Activated CD4-positive, alpha-beta T cell treated with anti-CD3 and anti-CD28 coated beads for 36 hours (primary cell): ENCODE measurements at regions of chr12 and their contacts with region 1.

Region 1: GRCh38 chr12:96489103-96490056 is at the start of gene CFAP54:
- DNase-seq: peak; percentile 97
- ATAC-seq: peak; percentile 86
- H3K4me3 Mint-ChIP-seq: peak within 1 kb of the TSS; percentile 80
- H3K27ac Mint-ChIP-seq: peak within 1 kb of the TSS; percentile 66
- H3K4me1 Mint-ChIP-seq: peaks cover 33% of the 10 kb centered on the region
- H3K27me3 Mint-ChIP-seq: no peaks in the 10 kb centered on the region
- total RNA-seq, gene CFAP54: 0.37 to 0.44 TPM

Region 2: GRCh38 chr12:96177013-96177412 is 312.4 kb before region 1 on chr12:
- CTCF ChIA-PET with region 1: no interaction called
- POLR2A ChIA-PET with region 1: no interaction called
- intact Hi-C with region 1: loop called (anchors 1 kb)
- DNase-seq: peak; percentile 88
- ATAC-seq: peak; percentile 98
- H3K4me3 Mint-ChIP-seq: peak overlapping the region; percentile 18
- H3K27ac Mint-ChIP-seq: peak overlapping the region; percentile 83
- H3K4me1 Mint-ChIP-seq: peaks cover 25% of the 10 kb centered on the region
- H3K27me3 Mint-ChIP-seq: no peaks in the 10 kb centered on the region

Region 3: DNA sequence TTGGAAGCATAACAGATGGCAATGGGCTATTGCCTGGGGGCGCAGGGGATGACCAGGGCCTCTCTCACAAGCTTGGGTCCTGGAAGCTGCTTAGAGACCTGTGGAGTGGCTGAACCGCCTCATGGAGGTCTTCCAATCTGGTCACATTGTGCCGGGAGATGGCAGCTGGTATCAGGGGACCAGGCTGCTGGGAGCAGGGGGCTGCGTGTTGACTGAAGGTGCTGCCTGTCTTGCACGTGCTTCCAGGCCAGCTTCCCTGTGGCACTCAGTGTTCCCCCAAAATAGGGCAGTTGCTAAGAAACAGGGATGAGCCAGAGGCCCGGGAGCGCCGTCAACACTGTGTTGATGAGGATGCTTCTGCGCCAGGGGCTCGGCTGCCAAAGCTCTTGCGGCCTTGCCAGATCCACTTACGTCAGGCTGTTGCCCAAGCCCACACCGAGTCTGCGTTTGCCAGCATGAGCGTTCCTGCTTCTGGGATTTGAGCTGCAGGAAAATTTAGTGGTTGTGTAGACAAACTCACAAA is 255.4 kb before region 1 on chr12:
- CTCF ChIA-PET with region 1: no interaction called
- POLR2A ChIA-PET with region 1: no interaction called
- intact Hi-C with region 1: no loop called
- DNase-seq: no peak
- ATAC-seq: no peak
- H3K4me3 Mint-ChIP-seq: no peak overlapping the region
- H3K27ac Mint-ChIP-seq: no peak overlapping the region
- H3K4me1 Mint-ChIP-seq: peaks cover 46% of the 10 kb centered on the region
- H3K27me3 Mint-ChIP-seq: no peaks in the 10 kb centered on the region

Region 4: GRCh38 chr12:96434107-96434506 is 55.3 kb before region 1 on chr12:
- CTCF ChIA-PET with region 1: interaction called, 3 read pairs
- POLR2A ChIA-PET with region 1: no interaction called
- intact Hi-C with region 1: loop called (anchors 1 to 2 kb)
- DNase-seq: peak; percentile 85
- ATAC-seq: peak; percentile 99
- H3K4me3 Mint-ChIP-seq: peak overlapping the region; percentile 17
- H3K27ac Mint-ChIP-seq: peak overlapping the region; percentile 83
- H3K4me1 Mint-ChIP-seq: peaks cover 26% of the 10 kb centered on the region
- H3K27me3 Mint-ChIP-seq: no peaks in the 10 kb centered on the region

Region 5: DNA sequence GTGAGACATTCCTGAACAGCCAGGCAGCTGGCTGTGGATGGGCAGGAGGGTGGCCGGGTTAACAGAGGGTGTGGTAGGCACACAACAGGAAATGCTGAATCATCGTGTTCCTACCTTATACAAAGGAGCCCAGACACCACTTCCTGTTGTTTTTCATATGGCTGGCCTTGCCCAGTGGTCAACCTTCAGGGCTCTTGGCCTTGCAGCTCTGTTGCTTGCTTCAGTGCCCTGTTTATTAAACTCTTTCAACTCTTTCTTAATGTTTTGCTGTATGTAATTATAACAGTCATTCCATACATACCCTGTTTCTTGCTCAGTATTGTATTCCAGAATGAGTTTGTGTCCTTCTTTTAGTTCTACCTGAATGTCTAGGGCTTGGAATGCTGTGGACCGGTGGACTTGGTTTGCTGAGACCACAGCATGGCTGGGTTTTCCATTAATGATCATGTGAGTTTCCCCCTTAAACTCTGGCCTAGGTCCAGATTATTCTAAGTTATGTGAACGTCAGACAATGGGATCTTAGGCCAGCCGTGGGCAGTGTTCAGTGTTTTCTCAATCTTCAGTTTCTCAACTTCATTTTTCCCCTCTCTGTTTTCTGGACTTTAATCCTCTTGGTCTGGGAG is 11.9 kb after region 1 on chr12:
- CTCF ChIA-PET with region 1: interaction called, 21 read pairs
- POLR2A ChIA-PET with region 1: no interaction called
- intact Hi-C with region 1: loop called (anchors 1 kb)
- DNase-seq: peak; percentile 47
- ATAC-seq: peak; percentile 76
- H3K4me3 Mint-ChIP-seq: no peak overlapping the region
- H3K27ac Mint-ChIP-seq: peak overlapping the region; percentile 79
- H3K4me1 Mint-ChIP-seq: peaks cover 32% of the 10 kb centered on the region
- H3K27me3 Mint-ChIP-seq: no peaks in the 10 kb centered on the region

Region 6: GRCh38 chr12:96526110-96526509 is 36.7 kb after region 1 on chr12:
- CTCF ChIA-PET with region 1: no interaction called
- POLR2A ChIA-PET with region 1: no interaction called
- intact Hi-C with region 1: no loop called
- DNase-seq: no peak
- ATAC-seq: peak; percentile 60
- H3K4me3 Mint-ChIP-seq: no peak overlapping the region
- H3K27ac Mint-ChIP-seq: peak overlapping the region; percentile 27
- H3K4me1 Mint-ChIP-seq: peaks cover 5% of the 10 kb centered on the region
- H3K27me3 Mint-ChIP-seq: no peaks in the 10 kb centered on the region